CD14-positive monocyte (primary cell): ENCODE measurements at regions of chr11 and their contacts with region 1.

Region 1: GRCh38 chr11:105098800-105099199 is 40.8 kb downstream of the CARD18 start:
- DNase-seq: no peak
- H3K4me3 ChIP-seq: no peak overlapping the region
- H3K4me3 Mint-ChIP-seq: no peak overlapping the region
- H3K27ac ChIP-seq: peak overlapping the region in 1 of 2 donors; percentile 86
- H3K27ac Mint-ChIP-seq: peak overlapping the region in 5 of 7 donors; percentile 11 to 62 (median 52)
- H3K4me1 ChIP-seq: peaks cover 28 to 35% of the 10 kb centered on the region in 2 donors
- H3K4me1 Mint-ChIP-seq: peaks cover 34% of the 10 kb centered on the region
- H3K27me3 ChIP-seq: no peaks in the 10 kb centered on the region
- H3K27me3 Mint-ChIP-seq: peaks cover 0 to 3% (median 0%) of the 10 kb centered on the region in 3 donors
- CTCF ChIP-seq: no peak

Region 2: DNA sequence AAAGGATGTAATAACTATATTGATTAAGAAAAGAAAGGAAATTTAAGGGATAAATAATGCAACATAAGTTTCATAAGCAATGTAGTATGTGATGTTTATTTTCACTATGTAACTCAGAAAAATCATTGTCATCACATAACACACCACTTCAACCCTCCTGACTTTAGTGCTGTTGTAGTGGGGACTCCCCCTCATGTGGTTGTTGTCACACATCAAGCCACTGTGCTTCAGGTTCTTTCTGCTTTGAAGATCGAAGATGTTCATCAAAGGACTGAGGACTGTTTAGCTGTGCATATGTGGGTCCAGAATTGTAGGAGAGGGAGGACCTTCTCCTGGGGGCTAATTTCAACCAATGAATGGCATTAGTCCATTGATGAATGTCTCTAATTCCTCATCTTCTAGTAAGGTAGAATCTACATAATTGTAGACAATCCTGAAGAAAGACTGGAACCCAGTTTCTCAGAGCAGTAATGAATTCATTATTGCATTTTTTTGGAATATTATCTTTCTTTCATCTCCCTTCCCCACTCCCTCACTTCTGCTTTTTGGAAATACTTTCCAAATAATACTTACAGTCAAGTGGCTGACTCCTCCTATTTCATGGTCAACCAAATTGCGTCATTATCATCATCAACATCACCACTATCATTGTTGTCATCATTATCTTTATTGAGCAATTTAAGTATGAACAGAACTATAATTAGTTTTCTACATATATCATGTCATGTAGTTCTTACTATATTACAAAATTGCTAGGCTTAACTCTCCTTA is 43.9 kb before region 1 on chr11:
- intact Hi-C with region 1: loop called in 1 of 2 experiments (anchors 5 kb)
- DNase-seq: peak; percentile 59 to 78 (median 62)
- H3K4me3 ChIP-seq: no peak overlapping the region
- H3K4me3 Mint-ChIP-seq: no peak overlapping the region
- H3K27ac ChIP-seq: no peak overlapping the region
- H3K27ac Mint-ChIP-seq: peak overlapping the region in 5 of 7 donors; percentile 40 to 77 (median 70)
- H3K4me1 ChIP-seq: no peaks in the 10 kb centered on the region
- H3K4me1 Mint-ChIP-seq: peaks cover 16% of the 10 kb centered on the region
- H3K27me3 ChIP-seq: no peaks in the 10 kb centered on the region
- H3K27me3 Mint-ChIP-seq: peaks cover 0 to 2% (median 0%) of the 10 kb centered on the region in 3 donors
- CTCF ChIP-seq: no peak

Region 3: DNA sequence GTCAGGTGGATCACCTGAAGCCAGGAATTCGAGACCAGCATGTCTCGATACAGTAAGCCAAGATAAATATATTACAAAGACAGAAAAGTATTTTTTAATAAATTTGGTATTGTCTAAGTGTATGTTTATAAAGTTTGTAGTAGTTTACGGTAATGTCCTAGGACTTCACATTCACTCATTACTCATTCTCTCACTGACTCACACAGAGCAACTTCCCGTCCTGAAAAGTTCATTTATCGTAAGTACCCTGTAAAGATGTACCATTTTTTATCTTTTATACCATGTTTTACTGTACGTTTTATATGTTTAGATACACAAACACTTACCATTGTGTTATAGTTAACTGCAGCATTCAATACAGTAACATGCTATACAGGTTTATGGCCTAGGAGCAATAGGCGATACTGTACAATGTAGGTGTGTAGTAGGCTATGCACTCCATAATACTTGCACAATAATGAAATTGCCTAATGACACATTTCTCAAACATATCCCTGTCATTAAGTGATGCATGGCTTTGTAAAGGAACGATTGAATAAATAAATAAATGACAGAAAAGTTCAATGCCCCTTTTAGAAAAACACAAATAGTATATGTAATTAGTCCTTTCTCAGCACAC is 53.2 kb after region 1 on chr11:
- intact Hi-C with region 1: no loop called
- DNase-seq: peak; percentile 8 to 44 (median 12)
- H3K4me3 ChIP-seq: no peak overlapping the region
- H3K4me3 Mint-ChIP-seq: no peak overlapping the region
- H3K27ac ChIP-seq: no peak overlapping the region
- H3K27ac Mint-ChIP-seq: peak overlapping the region in 2 of 7 donors; percentile 1 to 2
- H3K4me1 ChIP-seq: peaks cover 0 to 8% of the 10 kb centered on the region in 2 donors
- H3K4me1 Mint-ChIP-seq: peaks cover 7% of the 10 kb centered on the region
- H3K27me3 ChIP-seq: no peaks in the 10 kb centered on the region
- H3K27me3 Mint-ChIP-seq: peaks cover 0 to 1% (median 0%) of the 10 kb centered on the region in 3 donors
- CTCF ChIP-seq: no peak